ENCODE measurements at regions of chr17 and their contacts with region 1.

Region 1: GRCh38 chr17:76005263-76006149 is 4.9 kb downstream of the CDK3 start:
- DNase-seq: peak; percentile 85
- H3K4me3 ChIP-seq: no peak overlapping the region
- H3K27ac ChIP-seq: no peak overlapping the region
- H3K4me1 ChIP-seq: peaks cover 0 to 10% (median 0%) of the 10 kb centered on the region in 4 donors
- H3K27me3 ChIP-seq: no peaks in the 10 kb centered on the region
- CTCF ChIP-seq: peak; percentile 45 to 63 (median 62)
- EP300 ChIP-seq: no peak
- POLR2A ChIP-seq: no peak

Region 2: GRCh38 chr17:75779231-75779986 is 226.1 kb before region 1 on chr17:
- intact Hi-C with region 1: no loop called
- DNase-seq: peak; percentile 99
- H3K4me3 ChIP-seq: peak overlapping the region; percentile 78 to 97 (median 86)
- H3K27ac ChIP-seq: peak overlapping the region; percentile 94 to 99 (median 98)
- H3K4me1 ChIP-seq: peaks cover 0 to 41% (median 32%) of the 10 kb centered on the region in 4 donors
- H3K27me3 ChIP-seq: no peaks in the 10 kb centered on the region
- CTCF ChIP-seq: no peak
- EP300 ChIP-seq: peak in 2 of 4 donors; percentile 70 to 88
- POLR2A ChIP-seq: peak; percentile 100

Region 3: DNA sequence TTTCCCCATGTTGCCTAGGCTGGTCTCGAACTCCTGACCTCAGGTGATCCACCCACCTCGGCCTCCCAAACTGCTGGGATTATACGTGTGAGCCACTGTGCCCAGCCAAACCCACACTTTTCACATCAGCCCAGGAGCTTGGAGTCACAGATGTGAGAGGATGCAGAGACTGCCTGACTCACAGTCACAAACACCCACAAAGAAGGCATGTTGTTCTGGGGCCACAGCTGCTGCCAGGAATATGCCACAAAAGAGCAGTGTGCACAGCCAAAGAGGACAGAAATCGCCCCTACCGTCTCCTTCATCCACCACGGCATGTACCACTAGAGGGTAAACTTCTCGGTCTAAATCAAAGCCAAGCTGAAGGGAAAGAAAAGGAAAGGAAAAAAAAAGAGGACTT is 160.7 kb after region 1 on chr17:
- intact Hi-C with region 1: no loop called
- DNase-seq: no peak
- H3K4me3 ChIP-seq: no peak overlapping the region
- H3K27ac ChIP-seq: no peak overlapping the region
- H3K4me1 ChIP-seq: no peaks in the 10 kb centered on the region
- H3K27me3 ChIP-seq: no peaks in the 10 kb centered on the region
- CTCF ChIP-seq: no peak
- EP300 ChIP-seq: no peak
- POLR2A ChIP-seq: no peak

Region 4: GRCh38 chr17:76182016-76182764 is 176.7 kb after region 1 on chr17:
- intact Hi-C with region 1: loop called (anchors 10 kb)
- DNase-seq: peak; percentile 93
- H3K4me3 ChIP-seq: no peak overlapping the region
- H3K27ac ChIP-seq: peak overlapping the region in 1 of 4 donors; percentile 7
- H3K4me1 ChIP-seq: peaks cover 0 to 4% (median 0%) of the 10 kb centered on the region in 4 donors
- H3K27me3 ChIP-seq: no peaks in the 10 kb centered on the region
- CTCF ChIP-seq: peak; percentile 80 to 91 (median 86)
- EP300 ChIP-seq: no peak
- POLR2A ChIP-seq: no peak

Region 5: DNA sequence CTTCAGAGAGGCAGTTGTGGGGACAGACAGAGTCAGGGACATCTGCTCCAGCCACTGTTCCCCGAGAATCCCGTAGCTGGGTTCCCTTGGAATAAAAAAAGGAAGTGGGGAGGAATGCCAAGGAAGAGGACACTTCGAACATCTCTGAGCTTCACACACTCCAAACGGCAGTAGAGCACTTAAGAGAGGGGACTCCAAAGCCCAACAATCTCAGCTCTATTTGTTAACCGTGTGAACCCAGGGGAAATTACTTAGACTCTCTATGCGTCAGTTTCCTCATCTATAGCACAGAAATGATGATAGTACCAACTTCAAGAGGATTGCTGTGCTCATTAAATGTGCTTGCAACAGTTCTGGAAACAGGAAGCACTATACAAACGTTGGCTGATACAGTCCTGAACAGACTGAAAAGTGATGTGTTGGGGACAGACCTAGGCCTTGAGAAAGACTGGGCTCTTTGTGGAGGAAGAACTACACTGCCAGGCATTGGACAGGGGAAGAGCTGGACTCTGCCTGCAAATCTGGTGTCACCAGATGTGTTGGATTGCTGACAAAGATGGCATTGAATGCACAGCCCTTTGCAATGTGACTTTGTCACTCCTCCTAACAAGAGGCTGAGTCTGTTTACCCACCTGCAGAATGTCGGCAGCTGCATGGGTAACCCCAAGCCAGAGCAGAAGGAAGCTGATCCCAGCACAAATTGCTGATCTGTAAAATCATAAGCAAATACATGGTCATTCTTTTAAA is 592.4 kb after region 1 on chr17:
- intact Hi-C with region 1: no loop called
- DNase-seq: no peak
- H3K4me3 ChIP-seq: no peak overlapping the region
- H3K27ac ChIP-seq: no peak overlapping the region
- H3K4me1 ChIP-seq: no peaks in the 10 kb centered on the region
- H3K27me3 ChIP-seq: peaks cover 0 to 4% (median 0%) of the 10 kb centered on the region in 3 donors
- CTCF ChIP-seq: no peak
- EP300 ChIP-seq: no peak
- POLR2A ChIP-seq: no peak

Measured in sigmoid colon (tissue), 7 donors.